ENCODE measurements at regions of chr17 and their contacts with region 1.

Region 1: DNA sequence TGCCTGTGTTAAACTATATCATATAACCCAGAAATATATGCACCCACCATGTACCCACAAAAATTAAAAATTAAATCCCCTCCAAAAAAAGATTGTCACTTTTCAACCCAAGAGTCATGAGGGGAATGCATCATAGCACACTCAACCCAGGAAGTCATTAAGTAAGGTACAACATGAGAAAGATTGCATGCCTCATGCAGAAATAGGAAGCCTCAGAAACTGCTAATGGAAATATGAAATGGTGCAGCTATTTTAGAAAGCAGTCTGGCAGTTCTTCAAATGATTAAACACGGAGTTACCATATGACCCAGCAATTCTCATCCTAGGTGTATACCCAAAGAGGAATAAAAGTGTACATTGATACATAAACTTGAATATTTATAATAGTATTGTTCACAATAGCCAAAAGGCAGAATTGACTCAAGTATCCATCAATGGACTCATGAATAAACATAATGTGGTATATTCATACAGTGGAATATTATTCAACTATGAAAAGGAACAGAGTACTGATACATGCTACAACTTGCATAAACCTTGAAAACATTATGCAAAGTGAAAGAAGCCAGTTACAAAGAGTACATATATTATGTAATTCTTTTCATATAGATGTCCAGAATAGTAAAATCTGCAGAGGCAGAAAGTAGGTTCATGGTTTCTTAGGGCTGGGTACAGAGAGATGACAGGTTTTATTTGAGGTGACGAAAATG is 70.4 kb downstream of the TMEM100 start:
- DNase-seq: no peak
- ATAC-seq: no peak
- H3K4me3 ChIP-seq: no peak overlapping the region
- H3K27ac ChIP-seq: no peak overlapping the region
- H3K4me1 ChIP-seq: no peaks in the 10 kb centered on the region
- H3K27me3 ChIP-seq: peaks cover 0 to 3% (median 0%) of the 10 kb centered on the region in 3 donors
- CTCF ChIP-seq: no peak

Region 2: GRCh38 chr17:55705849-55706248 is 53.6 kb after region 1 on chr17:
- intact Hi-C with region 1: loop called in 1 of 2 experiments (anchors 10 kb)
- DNase-seq: no peak
- ATAC-seq: peak in 2 of 4 donors; percentile 17 to 31
- H3K4me3 ChIP-seq: no peak overlapping the region
- H3K27ac ChIP-seq: no peak overlapping the region
- H3K4me1 ChIP-seq: peaks cover 33% of the 10 kb centered on the region
- H3K27me3 ChIP-seq: no peaks in the 10 kb centered on the region
- CTCF ChIP-seq: no peak

Measured in psoas muscle (tissue), 8 donors.